GM13977 (cell line): ENCODE measurements at regions of chrX and their contacts with region 1.

Region 1: GRCh38 chrX:119516157-119516702 is 48.0 kb downstream of the SLC25A5 start:
- DNase-seq: peak; percentile 84
- CTCF ChIP-seq: peak; percentile 86

Region 2: DNA sequence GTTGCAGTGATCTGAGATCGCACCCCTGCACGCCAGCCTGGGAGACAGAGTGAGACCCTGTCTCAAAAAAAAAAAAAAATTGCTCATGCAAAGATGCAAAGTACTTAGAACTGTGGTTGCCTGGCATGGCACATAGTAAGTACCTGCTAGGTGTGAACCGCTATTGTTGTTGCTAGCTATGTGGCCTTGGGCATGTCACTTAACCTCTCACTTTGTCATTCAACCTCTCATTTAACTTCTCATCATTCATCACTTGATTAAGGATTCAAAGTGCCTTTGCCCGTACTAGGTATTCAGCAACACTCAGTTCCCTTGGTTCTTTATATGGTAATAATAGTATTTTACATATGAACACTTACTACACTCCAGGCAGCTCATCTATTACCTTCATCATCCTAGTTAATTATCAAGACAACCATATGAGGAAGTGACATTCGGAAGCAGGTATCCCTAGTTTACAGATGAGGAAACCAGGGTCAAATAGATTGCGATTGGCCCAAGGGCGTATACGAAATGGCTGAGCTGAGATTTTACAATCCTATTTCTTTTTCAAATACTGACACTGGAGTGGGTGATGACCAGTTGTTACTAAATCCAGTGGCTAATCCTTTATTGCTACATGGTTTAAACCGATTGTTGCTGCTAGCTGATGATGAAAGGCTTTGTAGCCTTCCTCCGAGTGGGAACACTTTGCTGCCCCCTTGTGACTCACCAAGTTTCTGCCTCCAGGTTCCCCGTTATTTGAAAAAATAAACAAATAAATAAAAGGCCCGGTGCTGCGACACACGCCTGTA is 213.4 kb after region 1 on chrX:
- in situ Hi-C with region 1: loop called (anchors 25 kb)
- DNase-seq: peak; percentile 64
- CTCF ChIP-seq: peak; percentile 70

Region 3: GRCh38 chrX:119880552-119881437 is 364.6 kb after region 1 on chrX:
- in situ Hi-C with region 1: loop called (anchors 25 kb)
- DNase-seq: peak; percentile 73
- CTCF ChIP-seq: peak; percentile 68